Right ventricle myocardium superior (tissue), 1 donor: ENCODE measurements at regions of chr12 and their contacts with region 1.

Region 1: DNA sequence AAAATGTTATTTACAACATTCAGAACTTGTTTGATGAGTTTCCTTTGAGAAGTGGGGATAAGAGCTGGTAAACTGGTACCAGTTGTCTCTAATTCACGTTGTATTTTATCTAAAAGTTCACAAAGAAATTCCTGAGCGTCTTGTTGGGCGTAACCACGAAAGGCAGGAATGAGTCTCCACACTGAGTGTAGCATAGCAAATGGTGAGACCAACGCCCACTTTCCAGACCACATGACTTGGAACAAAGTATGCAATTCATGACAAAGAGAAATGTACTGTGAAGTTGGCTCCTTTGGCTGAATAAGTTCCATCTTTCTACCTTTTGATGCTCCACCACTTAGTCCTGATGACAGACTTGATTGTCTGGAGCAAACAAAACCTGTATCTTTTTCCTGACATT is 18.4 kb downstream of the USP44 start:
- DNase-seq: no peak
- ATAC-seq: no peak

Region 2: GRCh38 chr12:95117178-95117599 is 415.7 kb before region 1 on chr12:
- intact Hi-C with region 1: loop called (anchors 10 kb)
- DNase-seq: no peak
- ATAC-seq: peak; percentile 95

Region 3: GRCh38 chr12:95358111-95359083 is 174.5 kb before region 1 on chr12:
- intact Hi-C with region 1: loop called (anchors 5 kb)
- DNase-seq: no peak
- ATAC-seq: no peak

Region 4: GRCh38 chr12:95368931-95369330 is 163.9 kb before region 1 on chr12:
- intact Hi-C with region 1: no loop called
- DNase-seq: no peak
- ATAC-seq: no peak

Region 5: DNA sequence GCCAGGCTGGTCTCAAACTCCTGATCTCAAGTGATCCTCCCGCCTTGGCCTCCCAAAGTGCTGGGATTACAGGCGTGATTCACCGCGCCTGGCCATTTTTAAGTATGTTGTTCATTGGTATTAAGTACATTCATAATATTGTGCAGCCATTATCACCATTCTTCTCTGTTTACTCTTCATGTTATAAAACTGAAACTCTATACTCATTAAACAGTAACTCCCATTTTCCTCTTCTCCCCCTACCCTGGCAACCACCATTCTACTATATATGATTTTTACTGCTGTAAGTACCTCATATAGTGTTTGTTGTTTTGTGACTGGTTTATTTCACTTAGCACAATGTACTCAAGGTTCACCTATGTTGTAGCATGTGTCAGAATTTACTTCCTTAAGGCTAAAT is 35.8 kb before region 1 on chr12:
- intact Hi-C with region 1: no loop called
- DNase-seq: no peak
- ATAC-seq: no peak

Region 6: GRCh38 chr12:95633049-95633545 is 100.2 kb after region 1 on chr12:
- intact Hi-C with region 1: no loop called
- DNase-seq: no peak
- ATAC-seq: peak; percentile 49